ENCODE measurements at regions of chr6 and their contacts with region 1.

Region 1: GRCh38 chr6:52263709-52264540 is 19.6 kb upstream of the IL17F start:
- DNase-seq: no peak
- H3K4me3 ChIP-seq: no peak overlapping the region
- H3K27me3 ChIP-seq: no peaks in the 10 kb centered on the region
- CTCF ChIP-seq: peak; percentile 99

Region 2: GRCh38 chr6:52162940-52163908 is 100.7 kb before region 1 on chr6:
- CTCF ChIA-PET with region 1: interaction called, 16 read pairs
- POLR2A ChIA-PET with region 1: no interaction called
- DNase-seq: no peak
- H3K4me3 ChIP-seq: no peak overlapping the region
- H3K27me3 ChIP-seq: peaks cover 2% of the 10 kb centered on the region; the same call in 1 of the 2 replicates
- CTCF ChIP-seq: peak; percentile 69

Region 3: GRCh38 chr6:52183131-52183713 is 80.7 kb before region 1 on chr6:
- CTCF ChIA-PET with region 1: interaction called, 3 read pairs
- POLR2A ChIA-PET with region 1: interaction called, 12 read pairs
- DNase-seq: no peak
- H3K4me3 ChIP-seq: no peak overlapping the region
- H3K27me3 ChIP-seq: no peaks in the 10 kb centered on the region
- CTCF ChIP-seq: no peak

Region 4: DNA sequence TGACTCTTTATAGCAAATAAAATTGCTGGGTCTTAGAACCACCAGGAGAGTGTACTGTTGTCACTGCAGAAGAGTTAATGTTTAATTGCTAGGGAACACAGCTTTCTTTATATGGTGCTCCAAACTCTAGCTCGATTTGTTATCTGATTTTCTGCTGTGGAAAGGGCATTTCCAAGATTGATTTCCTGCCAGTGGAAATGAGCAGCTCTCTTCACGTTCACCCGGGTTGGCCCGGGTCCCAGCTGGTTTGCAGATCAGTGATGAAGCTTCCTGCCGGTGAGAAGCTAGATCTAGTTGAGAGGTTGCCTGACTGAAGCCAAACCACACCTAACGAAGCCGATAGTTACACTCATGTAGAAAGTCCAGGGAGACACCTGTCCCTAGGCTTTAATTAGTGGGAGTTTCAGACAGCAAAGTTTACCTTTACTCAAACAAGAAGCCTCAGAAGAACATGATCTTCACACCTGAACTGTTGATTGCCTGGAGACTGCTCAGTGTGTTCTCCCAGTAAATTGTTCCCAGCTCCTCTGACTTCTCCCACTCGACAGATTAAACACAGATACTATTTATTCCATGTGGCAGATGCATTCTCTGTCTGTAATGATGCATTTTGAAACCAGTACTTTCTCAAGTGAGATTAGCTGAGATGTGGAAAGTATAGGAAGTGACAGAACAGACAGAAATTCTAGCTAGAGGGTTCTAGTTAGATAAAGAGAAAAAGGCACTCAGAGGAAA is 125.9 kb after region 1 on chr6:
- CTCF ChIA-PET with region 1: interaction called, 10 read pairs
- POLR2A ChIA-PET with region 1: no interaction called
- DNase-seq: no peak
- H3K4me3 ChIP-seq: no peak overlapping the region
- H3K27me3 ChIP-seq: no peaks in the 10 kb centered on the region
- CTCF ChIP-seq: no peak

Measured in BJ (cell line).